Heart right ventricle (tissue), 16 donors: ENCODE measurements at regions of chr6 and their contacts with region 1.

Region 1: GRCh38 chr6:109202409-109203284 is 107.3 kb downstream of the CEP57L1 start:
- DNase-seq: no peak
- ATAC-seq: no peak
- H3K4me3 ChIP-seq: no peak overlapping the region
- H3K27ac ChIP-seq: no peak overlapping the region
- H3K4me1 ChIP-seq: no peaks in the 10 kb centered on the region
- H3K27me3 ChIP-seq: no peaks in the 10 kb centered on the region
- CTCF ChIP-seq: no peak

Region 2: DNA sequence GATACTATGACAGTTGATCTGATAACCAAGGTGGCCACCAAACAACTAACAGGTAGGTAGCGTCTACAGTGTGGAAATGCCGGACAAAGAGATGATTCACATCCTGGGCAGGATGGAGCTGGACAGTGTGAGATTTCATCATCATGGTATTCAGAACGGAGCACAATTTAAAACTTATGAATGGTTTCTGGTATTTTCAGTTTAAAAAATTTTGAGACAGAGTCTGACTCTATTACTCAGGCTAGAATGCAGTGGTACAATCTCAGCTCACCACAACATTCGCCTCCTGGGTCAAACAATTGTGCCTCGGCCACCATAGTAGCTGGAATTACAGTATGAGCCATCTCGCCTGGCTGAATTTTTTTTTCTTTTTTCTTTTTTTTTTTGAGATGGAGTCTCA is 63.5 kb before region 1 on chr6:
- intact Hi-C with region 1: no loop called
- DNase-seq: no peak
- ATAC-seq: peak in 1 of 8 donors; percentile 29
- H3K4me3 ChIP-seq: no peak overlapping the region
- H3K27ac ChIP-seq: no peak overlapping the region
- H3K4me1 ChIP-seq: peaks cover 0 to 4% (median 0%) of the 10 kb centered on the region in 9 donors
- H3K27me3 ChIP-seq: no peaks in the 10 kb centered on the region
- CTCF ChIP-seq: no peak

Region 3: DNA sequence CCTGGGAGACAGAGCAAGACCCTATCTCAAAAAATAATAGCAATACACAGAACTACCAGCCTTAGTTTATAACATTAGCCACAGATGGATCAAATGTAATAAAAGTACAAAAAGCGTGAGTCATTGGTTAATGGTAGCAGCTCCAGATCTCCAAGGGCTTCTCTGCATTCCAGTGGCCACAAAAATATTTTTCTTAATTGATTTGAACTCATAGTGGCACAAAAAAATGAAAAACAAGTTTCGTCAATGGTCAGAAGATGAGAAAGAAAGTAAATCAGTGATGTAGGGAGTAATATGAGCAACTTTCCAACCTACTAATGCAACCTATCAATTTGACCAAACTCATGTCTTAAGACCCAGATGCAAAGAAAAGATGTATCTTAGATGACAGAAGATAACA is 27.7 kb before region 1 on chr6:
- intact Hi-C with region 1: loop called in 1 of 10 experiments (anchors 1 kb)
- DNase-seq: no peak
- ATAC-seq: no peak
- H3K4me3 ChIP-seq: no peak overlapping the region
- H3K27ac ChIP-seq: no peak overlapping the region
- H3K4me1 ChIP-seq: no peaks in the 10 kb centered on the region
- H3K27me3 ChIP-seq: peaks cover 0 to 5% (median 0%) of the 10 kb centered on the region in 7 donors
- CTCF ChIP-seq: no peak